Activated naive CD4-positive, alpha-beta T cell treated with anti-CD3 and anti-CD28 coated beads for 36 hours (primary cell): ENCODE measurements at regions of chr3 and their contacts with region 1.

Region 1: DNA sequence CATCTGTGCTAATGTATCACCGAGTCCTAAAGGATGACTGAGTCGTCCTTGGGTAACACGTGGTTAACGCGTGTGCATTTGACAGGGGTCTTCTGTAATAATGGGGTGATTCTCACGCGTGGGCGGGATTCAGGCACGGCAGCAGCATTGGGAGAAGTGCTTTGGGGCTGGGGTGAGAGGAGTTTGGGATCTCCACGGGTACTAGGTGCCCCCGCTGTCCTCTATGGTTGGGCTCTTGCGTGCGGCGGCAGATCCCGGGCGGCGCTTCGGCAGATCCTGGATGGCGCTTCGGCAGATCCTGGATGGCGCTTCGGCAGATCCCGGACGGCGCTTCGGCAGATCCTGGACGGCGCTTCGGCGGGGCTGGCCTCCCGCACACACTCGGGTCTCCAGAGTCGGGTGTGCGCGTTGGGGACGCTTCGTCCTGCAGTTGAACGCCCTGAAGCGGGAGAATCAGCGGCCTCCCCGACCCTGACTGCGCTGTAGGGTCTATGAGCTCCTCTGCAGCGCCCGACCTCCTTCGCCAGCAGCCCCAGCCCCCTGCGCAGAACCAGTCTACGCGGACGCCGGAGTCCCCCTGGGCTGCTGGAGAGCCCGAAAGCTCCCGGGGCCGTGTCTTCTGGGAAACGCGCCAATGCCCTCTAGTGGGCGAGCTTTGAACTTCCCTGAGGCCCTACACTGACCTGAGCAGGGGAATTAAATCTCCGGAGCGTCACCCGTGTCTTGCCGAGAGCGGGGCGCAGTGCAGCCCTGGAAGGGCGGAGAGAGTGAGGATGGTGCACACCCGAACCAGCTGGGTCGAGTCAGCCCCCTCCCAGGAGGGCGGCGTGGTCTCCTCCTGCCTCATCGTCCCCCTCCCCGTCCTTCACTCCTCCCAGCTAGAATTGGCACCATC is 48.1 kb upstream of the EPHB3 start:
- DNase-seq: peak; percentile 89
- H3K4me3 Mint-ChIP-seq: peak overlapping the region; percentile 63
- H3K27ac Mint-ChIP-seq: no peak overlapping the region
- H3K4me1 Mint-ChIP-seq: peaks cover 8% of the 10 kb centered on the region
- H3K27me3 Mint-ChIP-seq: peaks cover 41% of the 10 kb centered on the region

Region 2: GRCh38 chr3:184218814-184219213 is 294.7 kb before region 1 on chr3:
- CTCF ChIA-PET with region 1: no interaction called
- intact Hi-C with region 1: no loop called
- DNase-seq: no peak
- H3K4me3 Mint-ChIP-seq: no peak overlapping the region
- H3K27ac Mint-ChIP-seq: no peak overlapping the region
- H3K4me1 Mint-ChIP-seq: no peaks in the 10 kb centered on the region
- H3K27me3 Mint-ChIP-seq: peaks cover 10% of the 10 kb centered on the region

Region 3: GRCh38 chr3:184371570-184372018 is 141.9 kb before region 1 on chr3:
- CTCF ChIA-PET with region 1: interaction called, 85 read pairs
- intact Hi-C with region 1: loop called (anchors 1 kb)
- DNase-seq: peak; percentile 80
- H3K4me3 Mint-ChIP-seq: no peak overlapping the region
- H3K27ac Mint-ChIP-seq: no peak overlapping the region
- H3K4me1 Mint-ChIP-seq: peaks cover 16% of the 10 kb centered on the region
- H3K27me3 Mint-ChIP-seq: no peaks in the 10 kb centered on the region

Region 4: DNA sequence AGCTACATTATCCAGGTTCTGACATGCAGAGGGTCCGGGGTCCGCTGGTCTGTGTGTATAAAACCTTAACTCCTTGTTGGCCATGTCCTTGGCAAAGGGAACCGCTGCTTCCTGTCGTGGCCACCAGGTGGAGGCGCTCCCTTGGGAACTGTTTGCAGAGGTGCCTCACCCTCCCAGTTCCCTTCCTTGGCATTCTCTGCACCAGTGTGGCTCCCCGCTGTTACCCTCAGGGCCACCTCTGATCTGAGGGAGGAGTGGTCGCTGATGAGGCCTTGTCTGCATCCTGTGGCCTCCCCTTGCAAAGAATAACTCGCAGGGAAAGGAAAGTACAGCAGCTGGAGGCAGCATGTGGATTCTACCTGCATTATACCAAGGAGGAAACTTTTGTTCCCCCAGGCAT is 44.1 kb before region 1 on chr3:
- CTCF ChIA-PET with region 1: interaction called, 49 read pairs
- intact Hi-C with region 1: loop called (anchors 2 kb)
- DNase-seq: peak; percentile 68
- H3K4me3 Mint-ChIP-seq: no peak overlapping the region
- H3K27ac Mint-ChIP-seq: no peak overlapping the region
- H3K4me1 Mint-ChIP-seq: peaks cover 20% of the 10 kb centered on the region
- H3K27me3 Mint-ChIP-seq: peaks cover 11% of the 10 kb centered on the region

Region 5: DNA sequence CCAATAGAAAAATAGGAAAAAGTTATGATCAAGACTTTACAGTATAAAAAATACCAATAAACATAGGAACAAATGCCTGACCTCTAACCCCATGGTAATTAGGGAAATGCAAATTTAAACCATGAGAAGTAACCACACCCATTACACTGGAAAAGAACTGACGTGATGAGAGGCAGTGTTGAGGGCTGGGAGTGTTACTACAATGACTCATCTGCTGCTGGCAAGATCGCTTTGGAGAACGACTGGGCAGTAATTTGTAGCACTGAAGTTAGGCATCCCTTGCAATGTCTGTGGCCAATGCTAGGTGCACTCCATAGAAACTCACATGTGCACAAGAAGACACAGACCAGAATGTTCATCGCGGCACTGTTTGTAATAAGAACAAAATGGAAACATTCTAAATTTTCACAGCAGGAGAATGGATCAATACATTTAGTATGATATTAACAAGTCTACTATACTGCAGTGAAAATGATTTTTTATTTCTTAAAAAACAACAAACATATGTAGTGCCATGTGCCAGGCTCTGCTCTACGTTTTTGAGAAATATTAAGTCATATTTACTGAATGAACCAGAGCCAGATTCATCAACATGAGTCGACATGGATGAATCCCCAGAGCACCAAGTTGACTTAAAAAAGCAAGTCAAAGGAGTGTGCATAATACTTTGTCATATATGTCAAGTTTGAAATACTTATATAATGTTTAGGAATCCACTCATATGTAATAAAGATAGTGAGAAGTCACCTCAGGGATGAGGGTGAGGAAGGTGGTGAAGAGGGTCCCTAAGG is 10.5 kb after region 1 on chr3:
- CTCF ChIA-PET with region 1: interaction called, 11 read pairs
- intact Hi-C with region 1: no loop called
- DNase-seq: peak; percentile 45
- H3K4me3 Mint-ChIP-seq: no peak overlapping the region
- H3K27ac Mint-ChIP-seq: peak overlapping the region; percentile 60
- H3K4me1 Mint-ChIP-seq: peaks cover 11% of the 10 kb centered on the region
- H3K27me3 Mint-ChIP-seq: peaks cover 4% of the 10 kb centered on the region